ENCODE measurements at regions of chr14 and their contacts with region 1.

Region 1: DNA sequence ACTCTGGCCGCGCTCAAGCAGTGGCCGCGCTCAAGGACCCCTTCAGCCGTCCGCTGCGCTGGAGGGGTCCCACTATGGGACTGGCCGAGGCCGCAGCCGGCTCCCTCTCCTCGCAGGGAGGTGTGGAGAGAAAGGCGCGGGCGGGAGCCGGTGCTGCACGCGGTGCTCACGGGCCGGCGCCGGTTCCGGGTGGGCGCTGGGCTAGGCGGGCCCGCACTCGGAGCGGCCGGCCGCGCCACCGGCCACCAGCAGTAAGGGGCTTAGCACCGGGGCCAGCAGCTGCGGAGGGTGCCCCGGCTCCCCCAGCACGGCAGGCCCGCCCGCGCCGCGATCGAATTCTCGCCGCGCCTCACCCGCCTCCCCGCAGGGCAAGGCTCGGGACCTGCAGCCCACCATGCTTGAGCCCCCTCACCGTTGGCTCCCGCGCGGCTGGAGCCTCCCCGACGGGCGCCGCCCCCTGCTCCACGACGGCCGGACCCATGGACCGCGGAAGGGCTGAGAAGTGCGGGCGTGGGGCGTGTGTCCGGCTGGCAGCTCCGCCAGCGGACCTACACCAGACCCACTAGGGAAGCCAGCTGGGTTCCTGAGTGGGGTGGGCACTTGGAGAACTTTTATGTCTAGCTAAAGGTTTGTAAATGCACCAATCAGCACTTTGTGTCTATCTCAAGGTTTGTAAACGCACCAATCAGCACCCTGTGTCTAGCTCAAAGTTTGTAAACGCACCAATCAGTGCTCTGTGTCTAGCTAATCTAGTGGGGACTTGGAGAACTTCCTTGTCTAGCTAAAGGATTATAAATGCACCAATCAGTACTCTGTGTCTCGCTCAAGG is 49.5 kb downstream of the KLHL28 start:
- DNase-seq: no peak
- ATAC-seq: no peak
- H3K4me3 ChIP-seq: peak overlapping the region; percentile 39 to 47 (median 44)
- H3K27ac ChIP-seq: no peak overlapping the region
- H3K4me1 ChIP-seq: no peaks in the 10 kb centered on the region
- H3K27me3 ChIP-seq: peaks cover 17 to 24% (median 22%) of the 10 kb centered on the region in 3 donors
- CTCF ChIP-seq: no peak
- POLR2A ChIP-seq: no peak

Region 2: DNA sequence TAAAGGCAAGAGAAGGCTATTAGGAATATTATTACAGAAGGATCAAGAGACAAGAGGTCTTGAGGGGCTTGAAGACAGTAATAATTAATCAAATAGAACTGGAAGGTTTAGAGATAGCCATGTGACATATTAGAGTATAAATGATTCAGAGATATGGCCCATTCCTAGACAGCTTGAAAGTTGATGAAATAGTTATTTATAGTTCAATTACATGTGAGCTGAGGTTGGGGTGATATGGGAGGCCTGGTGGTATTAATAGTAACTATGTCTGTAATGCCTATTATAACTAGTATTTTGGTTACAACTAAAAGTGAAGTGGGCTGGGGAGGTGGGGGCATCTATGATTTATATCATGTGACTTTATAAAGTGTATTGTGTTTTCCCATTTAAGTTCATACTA is 354.8 kb after region 1 on chr14:
- in situ Hi-C with region 1: loop called (anchors 25 kb)
- intact Hi-C with region 1: loop called (anchors 2 kb)
- DNase-seq: no peak
- ATAC-seq: peak; percentile 86 to 94
- H3K4me3 ChIP-seq: no peak overlapping the region
- H3K27ac ChIP-seq: peak overlapping the region in 3 of 4 donors; percentile 16 to 45 (median 35)
- H3K4me1 ChIP-seq: peaks cover 6 to 11% of the 10 kb centered on the region in 2 donors
- H3K27me3 ChIP-seq: no peaks in the 10 kb centered on the region
- CTCF ChIP-seq: no peak
- POLR2A ChIP-seq: no peak

Measured in gastrocnemius medialis (tissue), 4 donors.